GM18951 (cell line): ENCODE measurements at regions of chr1 and their contacts with region 1.

Region 1: DNA sequence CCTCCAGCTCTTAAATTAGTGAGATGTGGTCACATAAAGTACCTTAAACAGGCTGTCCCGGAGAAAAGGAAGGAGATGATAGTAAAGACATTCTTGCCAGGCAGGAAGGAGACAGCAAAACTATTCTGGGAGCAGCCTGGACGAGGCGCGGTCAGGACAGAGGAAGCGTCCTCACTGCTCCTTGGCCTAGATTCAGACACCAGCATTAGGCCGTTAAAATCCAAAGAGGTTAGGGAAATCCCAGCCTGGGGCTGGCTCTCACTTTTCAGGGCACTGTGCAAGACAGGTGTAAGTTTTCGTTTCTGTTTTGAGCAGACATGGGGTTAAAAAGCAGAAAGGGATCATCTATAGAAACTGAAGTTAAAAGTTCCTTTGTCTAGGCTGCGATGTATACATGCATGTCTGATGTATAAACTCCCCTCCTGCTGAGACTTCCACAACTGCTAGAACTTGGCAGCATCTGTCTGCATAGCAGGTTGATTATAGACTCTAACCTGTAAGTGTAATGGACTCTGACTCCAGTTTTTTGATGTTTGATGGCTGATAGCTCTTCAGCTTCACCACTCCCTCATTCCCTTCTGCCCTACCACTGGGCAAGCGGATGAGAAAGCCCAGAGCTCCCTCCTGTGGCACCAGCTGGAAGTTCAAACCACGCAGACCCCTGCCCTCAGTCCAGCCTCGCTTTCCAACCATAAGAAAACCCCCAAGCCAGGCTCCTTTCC is 21.5 kb downstream of the STPG1 start:
- POLR2A ChIP-seq: peak; percentile 36

Region 2: GRCh38 chr1:24181619-24182018 is 210.4 kb before region 1 on chr1:
- in situ Hi-C with region 1: no loop called
- POLR2A ChIP-seq: no peak

Region 3: GRCh38 chr1:24201941-24202440 is 190.1 kb before region 1 on chr1:
- in situ Hi-C with region 1: loop called (anchors 5 kb)
- POLR2A ChIP-seq: no peak

Region 4: DNA sequence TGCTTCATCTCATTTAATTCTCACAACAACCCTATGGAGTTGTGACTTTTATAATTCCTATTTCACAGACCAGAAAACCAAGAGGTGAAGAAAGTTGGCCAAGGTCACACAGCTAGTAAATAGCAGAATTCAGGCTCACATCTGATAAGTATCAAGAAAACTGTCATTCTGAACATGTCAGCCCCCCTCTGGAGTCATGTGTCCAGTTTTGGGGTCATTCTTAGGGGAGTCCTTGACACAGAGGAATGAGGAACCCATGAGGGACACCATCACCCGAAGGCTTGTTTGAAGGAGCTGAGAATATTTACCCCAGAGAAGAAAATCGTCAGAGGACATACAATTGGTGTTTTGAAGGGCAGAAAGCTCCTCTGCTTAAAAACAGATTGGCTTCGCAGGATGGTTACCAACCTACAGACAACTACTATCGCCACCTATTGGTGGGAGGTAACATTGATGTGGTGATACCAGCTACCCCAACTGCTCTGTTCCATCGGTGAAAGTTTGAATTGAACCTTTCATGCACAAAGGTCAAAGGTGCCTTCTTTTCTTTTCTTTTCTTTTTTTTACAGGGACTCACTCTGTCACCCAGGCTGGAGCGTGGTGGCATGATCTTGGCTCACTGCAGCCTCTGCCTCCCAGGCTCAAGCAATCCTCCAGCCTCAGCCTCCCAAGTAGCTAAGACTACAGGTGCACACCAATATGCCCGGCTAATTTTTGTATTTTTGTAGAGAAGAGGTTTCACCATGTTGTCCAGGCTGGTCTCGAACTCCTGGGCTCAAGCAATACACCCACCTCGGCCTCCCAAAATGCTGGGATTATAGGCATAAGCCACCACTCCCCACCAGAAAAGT is 195.2 kb after region 1 on chr1:
- in situ Hi-C with region 1: loop called (anchors 10 kb)
- POLR2A ChIP-seq: no peak